GM12878 (cell line): ENCODE measurements at regions of chr4 and their contacts with region 1.

Region 1: DNA sequence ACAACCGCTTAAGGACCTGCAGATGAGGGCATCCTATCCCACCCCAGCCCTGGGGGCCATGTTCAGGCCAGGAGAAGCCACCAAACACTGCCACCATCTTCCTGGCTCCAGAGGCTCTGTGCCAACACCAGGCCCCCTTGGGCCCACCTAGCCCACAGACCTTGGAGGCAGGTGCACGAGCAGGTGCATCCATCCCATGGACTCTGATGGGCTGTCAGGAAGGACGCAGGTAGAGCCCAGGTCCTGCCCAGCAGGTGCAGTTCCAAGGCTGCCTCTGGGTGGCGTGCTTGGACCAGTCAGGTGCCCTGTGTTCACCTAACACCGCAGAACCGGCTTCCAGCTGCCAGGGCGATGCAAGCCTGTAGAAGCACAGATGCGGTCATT is 22.8 kb upstream of the PDE6B start:
- DNase-seq: no peak
- ATAC-seq: peak; percentile 72
- H3K4me3 ChIP-seq: no peak overlapping the region
- H3K27ac ChIP-seq: no peak overlapping the region
- H3K4me1 ChIP-seq: no peaks in the 10 kb centered on the region
- H3K27me3 ChIP-seq: no peaks in the 10 kb centered on the region
- CTCF ChIP-seq: peak; percentile 55 to 62 (median 58); a peak in 4 of 6 replicates
- EP300 ChIP-seq: no peak
- POLR2A ChIP-seq: no peak
- RAD21 ChIP-seq: peak; percentile 59

Region 2: DNA sequence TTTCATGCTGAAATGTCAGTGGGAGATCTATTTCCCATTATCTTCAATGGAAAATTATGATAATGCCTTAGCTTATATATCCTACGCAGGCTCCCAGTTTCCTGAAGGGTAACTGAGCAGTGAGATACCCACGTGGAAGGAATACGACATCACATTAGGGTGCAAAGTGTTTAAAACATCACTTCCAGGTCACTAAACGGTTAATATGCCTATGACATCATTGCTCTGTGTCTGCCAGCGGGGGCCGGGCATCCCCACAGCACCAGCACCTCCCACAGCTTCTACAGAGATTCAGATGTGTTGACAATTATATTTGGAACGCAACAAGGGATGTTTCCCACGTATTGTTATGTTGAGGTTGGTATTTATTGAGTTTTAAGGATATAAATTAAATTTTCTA is 53.6 kb before region 1 on chr4:
- CTCF ChIA-PET with region 1: no interaction called
- POLR2A ChIA-PET with region 1: no interaction called
- RAD21 ChIA-PET with region 1: no interaction called
- SMC1A ChIA-PET with region 1: no interaction called
- in situ Hi-C with region 1: no loop called
- intact Hi-C with region 1: no loop called
- DNase-seq: no peak
- ATAC-seq: no peak
- H3K4me3 ChIP-seq: no peak overlapping the region
- H3K27ac ChIP-seq: no peak overlapping the region
- H3K4me1 ChIP-seq: no peaks in the 10 kb centered on the region
- H3K27me3 ChIP-seq: no peaks in the 10 kb centered on the region
- CTCF ChIP-seq: no peak
- EP300 ChIP-seq: no peak
- POLR2A ChIP-seq: no peak
- RAD21 ChIP-seq: no peak

Region 3: GRCh38 chr4:590313-590841 is 12.2 kb before region 1 on chr4:
- CTCF ChIA-PET with region 1: no interaction called
- POLR2A ChIA-PET with region 1: no interaction called
- RAD21 ChIA-PET with region 1: no interaction called
- SMC1A ChIA-PET with region 1: no interaction called
- in situ Hi-C with region 1: no loop called
- intact Hi-C with region 1: no loop called
- DNase-seq: no peak
- ATAC-seq: no peak
- H3K4me3 ChIP-seq: no peak overlapping the region
- H3K27ac ChIP-seq: no peak overlapping the region
- H3K4me1 ChIP-seq: no peaks in the 10 kb centered on the region
- H3K27me3 ChIP-seq: no peaks in the 10 kb centered on the region
- CTCF ChIP-seq: no peak
- EP300 ChIP-seq: no peak
- POLR2A ChIP-seq: no peak
- RAD21 ChIP-seq: no peak

Region 4: GRCh38 chr4:616091-616490 is 13.5 kb after region 1 on chr4:
- CTCF ChIA-PET with region 1: interaction called, 5 read pairs
- POLR2A ChIA-PET with region 1: no interaction called
- RAD21 ChIA-PET with region 1: interaction called, 10 read pairs
- SMC1A ChIA-PET with region 1: interaction called, 7 read pairs
- in situ Hi-C with region 1: no loop called
- intact Hi-C with region 1: no loop called
- DNase-seq: no peak
- ATAC-seq: no peak
- H3K4me3 ChIP-seq: no peak overlapping the region
- H3K27ac ChIP-seq: no peak overlapping the region
- H3K4me1 ChIP-seq: no peaks in the 10 kb centered on the region
- H3K27me3 ChIP-seq: no peaks in the 10 kb centered on the region
- CTCF ChIP-seq: no peak
- EP300 ChIP-seq: no peak
- POLR2A ChIP-seq: no peak
- RAD21 ChIP-seq: no peak

Region 5: DNA sequence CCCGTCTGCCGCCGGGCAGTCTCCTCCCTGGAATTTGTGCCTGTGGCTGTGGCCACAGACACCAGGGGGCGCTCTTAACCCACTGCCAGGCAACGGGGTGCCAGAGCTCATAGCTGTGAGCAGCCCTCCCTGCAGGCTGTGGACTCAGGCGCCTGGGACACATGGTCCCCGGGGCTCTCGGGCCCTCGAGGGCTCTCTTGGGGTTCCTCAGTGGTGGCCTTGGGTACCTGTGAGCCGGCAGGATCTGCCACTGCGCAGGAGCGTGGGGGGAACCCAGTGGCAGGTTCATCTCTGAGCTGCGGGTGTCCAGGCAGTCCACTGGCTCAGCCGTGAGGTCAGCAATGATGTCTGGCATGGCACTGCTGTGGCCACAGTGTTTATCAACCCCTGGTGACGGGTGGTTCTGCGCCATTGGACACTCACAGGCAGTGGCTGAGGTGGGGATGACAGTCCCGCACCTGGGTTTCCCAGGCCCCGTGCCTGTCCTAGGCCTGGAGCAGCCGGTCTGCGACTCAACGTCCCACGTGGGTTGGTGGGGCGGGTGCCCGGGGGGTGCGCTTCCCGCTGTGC is 140.3 kb after region 1 on chr4:
- CTCF ChIA-PET with region 1: interaction called, 13 read pairs
- POLR2A ChIA-PET with region 1: no interaction called
- RAD21 ChIA-PET with region 1: interaction called, 4 read pairs
- SMC1A ChIA-PET with region 1: interaction called, 3 read pairs
- in situ Hi-C with region 1: no loop called
- intact Hi-C with region 1: no loop called
- DNase-seq: no peak
- ATAC-seq: peak; percentile 99
- H3K4me3 ChIP-seq: no peak overlapping the region
- H3K27ac ChIP-seq: no peak overlapping the region
- H3K4me1 ChIP-seq: no peaks in the 10 kb centered on the region
- H3K27me3 ChIP-seq: no peaks in the 10 kb centered on the region
- CTCF ChIP-seq: peak; percentile 82 to 94 (median 88)
- EP300 ChIP-seq: no peak
- POLR2A ChIP-seq: no peak
- RAD21 ChIP-seq: peak; percentile 77